ENCODE measurements at regions of chr3 and their contacts with region 1.

Region 1: DNA sequence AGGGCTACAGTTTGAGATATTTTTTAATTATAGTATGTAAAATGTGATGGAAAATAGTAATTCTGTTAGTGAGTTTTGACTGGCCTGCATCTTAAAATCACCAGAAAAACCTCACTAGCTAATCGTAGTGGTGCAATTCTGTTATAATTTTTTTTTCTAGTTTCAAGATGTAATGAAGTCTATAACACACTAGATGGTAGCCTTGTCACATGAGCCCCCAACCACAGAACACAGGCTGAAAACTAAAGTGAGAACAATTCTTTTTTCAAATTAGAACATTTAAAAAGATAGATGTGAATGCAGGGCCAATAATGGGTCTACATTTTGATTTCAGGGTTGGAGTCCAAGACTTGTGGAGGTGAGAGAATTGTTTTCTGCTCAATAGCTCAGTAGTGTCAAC is 83.3 kb upstream of the KCNH8 start:
- DNase-seq: no peak
- H3K4me3 ChIP-seq: no peak overlapping the region
- H3K27ac ChIP-seq: no peak overlapping the region
- H3K4me1 ChIP-seq: no peaks in the 10 kb centered on the region
- H3K27me3 ChIP-seq: peaks cover 0 to 2% (median 0%) of the 10 kb centered on the region in 4 experiments; a peak in 1 of 7 replicates
- CTCF ChIP-seq: peak in 2 of 3 experiments; percentile 47 to 57; a peak in 2 of 4 replicates
- EP300 ChIP-seq: no peak
- POLR2A ChIP-seq: no peak
- RAD21 ChIP-seq: peak; percentile 96

Region 2: DNA sequence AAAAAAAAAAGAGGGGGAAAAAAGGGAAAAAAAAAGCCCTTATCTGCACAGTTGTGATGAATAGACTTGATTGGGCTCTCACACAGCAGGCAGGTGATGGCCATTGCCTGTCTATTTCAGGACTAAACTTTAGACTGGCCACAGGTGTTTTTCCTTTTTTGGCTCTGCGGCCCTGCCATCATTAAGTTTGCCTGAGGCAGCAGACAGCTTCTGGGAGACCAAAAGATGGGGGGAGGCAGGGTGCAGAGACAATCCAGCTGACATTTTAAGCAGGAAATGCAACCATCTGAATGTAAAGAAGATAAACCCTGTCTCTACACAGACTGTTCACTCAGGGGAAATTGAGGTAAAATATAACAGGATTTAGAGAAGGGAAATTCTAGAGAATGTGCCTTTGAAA is 211.8 kb before region 1 on chr3:
- CTCF ChIA-PET with region 1: no interaction called
- POLR2A ChIA-PET with region 1: no interaction called
- DNase-seq: no peak
- H3K4me3 ChIP-seq: no peak overlapping the region
- H3K27ac ChIP-seq: no peak overlapping the region
- H3K4me1 ChIP-seq: no peaks in the 10 kb centered on the region
- H3K27me3 ChIP-seq: no peaks in the 10 kb centered on the region
- CTCF ChIP-seq: no peak
- EP300 ChIP-seq: no peak
- POLR2A ChIP-seq: no peak
- RAD21 ChIP-seq: no peak

Region 3: DNA sequence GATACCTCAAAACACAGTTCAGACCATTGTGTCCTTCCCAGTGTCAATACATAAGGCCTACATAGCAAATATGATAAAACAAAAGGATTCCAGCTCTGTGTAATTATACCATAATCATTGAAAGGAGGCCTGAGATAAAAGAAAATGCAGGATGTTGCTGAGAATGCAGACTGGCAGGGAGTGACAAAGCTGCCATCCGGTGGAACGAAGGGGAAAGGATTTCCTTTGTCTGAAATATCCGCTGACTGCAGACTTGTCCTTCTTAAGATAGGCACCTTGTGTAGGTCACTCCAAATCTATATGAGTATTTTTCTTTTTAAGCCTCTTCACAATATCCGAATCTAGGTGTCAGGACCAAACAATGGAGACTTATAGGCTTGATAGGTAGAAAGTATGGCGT is 191.3 kb after region 1 on chr3:
- CTCF ChIA-PET with region 1: interaction called, 31 read pairs
- POLR2A ChIA-PET with region 1: no interaction called
- DNase-seq: no peak
- H3K4me3 ChIP-seq: no peak overlapping the region
- H3K27ac ChIP-seq: no peak overlapping the region
- H3K4me1 ChIP-seq: peaks cover 0 to 2% (median 0%) of the 10 kb centered on the region in 4 experiments; a peak in 1 of 7 replicates
- H3K27me3 ChIP-seq: no peaks in the 10 kb centered on the region
- CTCF ChIP-seq: peak; percentile 38 to 58 (median 42); a peak in 3 of 4 replicates
- EP300 ChIP-seq: no peak
- POLR2A ChIP-seq: no peak
- RAD21 ChIP-seq: peak; percentile 73 to 75

Region 4: GRCh38 chr3:19866751-19867347 is 801.8 kb after region 1 on chr3:
- CTCF ChIA-PET with region 1: interaction called, 16 read pairs
- POLR2A ChIA-PET with region 1: no interaction called
- DNase-seq: peak; percentile 41 to 79
- H3K4me3 ChIP-seq: no peak overlapping the region
- H3K27ac ChIP-seq: no peak overlapping the region
- H3K4me1 ChIP-seq: no peaks in the 10 kb centered on the region
- H3K27me3 ChIP-seq: no peaks in the 10 kb centered on the region
- CTCF ChIP-seq: peak in 2 of 3 experiments; percentile 71 to 81; a peak in 3 of 4 replicates
- EP300 ChIP-seq: no peak
- POLR2A ChIP-seq: no peak
- RAD21 ChIP-seq: peak; percentile 97

Measured in H1 (cell line).